Activated CD4-positive, alpha-beta T cell treated with anti-CD3 and anti-CD28 coated beads, Interleukin-2, amount 10 ng/mL, durations not matched to agents 7 days and 5 days (primary cell): ENCODE measurements at regions of chr3 and their contacts with region 1.

Region 1: GRCh38 chr3:54681706-54682105 is 246.2 kb downstream of the LRTM1 start:
- DNase-seq: no peak
- H3K4me3 Mint-ChIP-seq: no peak overlapping the region
- H3K27ac Mint-ChIP-seq: no peak overlapping the region
- H3K4me1 Mint-ChIP-seq: no peaks in the 10 kb centered on the region
- H3K27me3 Mint-ChIP-seq: no peaks in the 10 kb centered on the region

Region 2: DNA sequence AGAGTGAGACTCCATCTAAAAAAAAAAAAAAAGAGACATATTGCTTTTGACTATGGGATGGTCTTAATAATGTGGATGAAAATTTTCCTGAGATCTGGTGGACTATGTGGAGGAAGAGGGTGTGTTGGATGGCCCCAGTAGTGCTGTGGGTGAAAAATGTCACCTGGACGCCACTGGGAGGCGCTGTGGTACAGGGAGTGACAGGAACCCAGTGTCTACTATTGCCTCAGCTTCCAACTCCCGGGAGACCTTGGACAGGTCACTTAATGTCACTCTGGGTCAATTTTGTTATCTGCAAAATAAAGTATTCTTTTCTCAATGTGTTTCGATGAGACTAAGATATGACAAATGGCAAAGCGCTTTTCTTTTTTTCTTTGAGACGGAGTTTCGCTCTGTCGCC is 1306.7 kb before region 1 on chr3:
- CTCF ChIA-PET with region 1: no interaction called
- POLR2A ChIA-PET with region 1: interaction called, 12 read pairs
- DNase-seq: peak; percentile 65
- H3K4me3 Mint-ChIP-seq: no peak overlapping the region
- H3K27ac Mint-ChIP-seq: no peak overlapping the region
- H3K4me1 Mint-ChIP-seq: no peaks in the 10 kb centered on the region
- H3K27me3 Mint-ChIP-seq: peaks cover 12% of the 10 kb centered on the region

Region 3: GRCh38 chr3:54262541-54262940 is 419.2 kb before region 1 on chr3:
- CTCF ChIA-PET with region 1: no interaction called
- POLR2A ChIA-PET with region 1: no interaction called
- DNase-seq: no peak
- H3K4me3 Mint-ChIP-seq: no peak overlapping the region
- H3K27ac Mint-ChIP-seq: no peak overlapping the region
- H3K4me1 Mint-ChIP-seq: no peaks in the 10 kb centered on the region
- H3K27me3 Mint-ChIP-seq: peaks cover 2% of the 10 kb centered on the region

Region 4: GRCh38 chr3:54712539-54712938 is 30.8 kb after region 1 on chr3:
- CTCF ChIA-PET with region 1: no interaction called
- POLR2A ChIA-PET with region 1: no interaction called
- DNase-seq: no peak
- H3K4me3 Mint-ChIP-seq: no peak overlapping the region
- H3K27ac Mint-ChIP-seq: no peak overlapping the region
- H3K4me1 Mint-ChIP-seq: no peaks in the 10 kb centered on the region
- H3K27me3 Mint-ChIP-seq: no peaks in the 10 kb centered on the region